IMR-90 (cell line): ENCODE measurements at regions of chr16 and their contacts with region 1.

Region 1: GRCh38 chr16:25224731-25225319 is 8.1 kb downstream of the AQP8 start:
- DNase-seq: no peak
- ATAC-seq: no peak
- H3K4me3 ChIP-seq: no peak overlapping the region
- H3K27ac ChIP-seq: no peak overlapping the region
- H3K4me1 ChIP-seq: no peaks in the 10 kb centered on the region
- H3K27me3 ChIP-seq: peaks cover 3% of the 10 kb centered on the region; the same call in 1 of the 2 replicates
- CTCF ChIP-seq: no peak
- POLR2A ChIP-seq: no peak
- RAD21 ChIP-seq: no peak

Region 2: GRCh38 chr16:25126820-25127232 is 98.0 kb before region 1 on chr16:
- CTCF ChIA-PET with region 1: no interaction called
- POLR2A ChIA-PET with region 1: no interaction called
- dilution Hi-C with region 1: no loop called
- in situ Hi-C with region 1: loop called (anchors 10 kb)
- intact Hi-C with region 1: loop called (anchors 2 kb)
- DNase-seq: peak; percentile 91
- ATAC-seq: peak; percentile 93
- H3K4me3 ChIP-seq: no peak overlapping the region
- H3K27ac ChIP-seq: no peak overlapping the region
- H3K4me1 ChIP-seq: peaks cover 5% of the 10 kb centered on the region
- H3K27me3 ChIP-seq: no peaks in the 10 kb centered on the region
- CTCF ChIP-seq: peak; percentile 85
- POLR2A ChIP-seq: no peak
- RAD21 ChIP-seq: peak; percentile 75